ENCODE measurements at regions of chr12 and their contacts with region 1.

Region 1: DNA sequence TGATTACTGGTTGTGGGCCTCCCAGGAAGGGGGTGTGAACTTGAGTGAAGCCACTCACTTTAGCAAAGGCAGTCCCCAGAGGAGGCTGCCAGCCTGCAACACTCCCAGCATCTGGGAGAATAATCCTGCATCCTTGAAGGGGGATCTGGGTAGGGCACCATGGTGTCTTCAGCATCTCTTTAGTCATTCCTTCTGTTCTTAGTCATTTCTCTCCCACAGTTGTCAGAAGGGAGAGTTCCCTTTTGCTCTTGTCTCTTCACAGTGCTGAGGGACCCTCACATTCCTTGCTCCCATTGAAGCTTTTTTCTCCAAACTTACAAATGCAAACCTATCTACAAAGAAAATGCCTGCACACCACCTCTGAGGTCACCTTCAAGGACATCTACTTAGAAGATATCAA is 48.1 kb upstream of the CIT start:
- DNase-seq: no peak
- ATAC-seq: no peak
- H3K4me3 ChIP-seq: no peak overlapping the region
- H3K27ac ChIP-seq: no peak overlapping the region
- H3K4me1 ChIP-seq: no peaks in the 10 kb centered on the region
- H3K27me3 ChIP-seq: no peaks in the 10 kb centered on the region; the same call in 1 of the 2 replicates
- CTCF ChIP-seq: no peak

Region 2: GRCh38 chr12:119704065-119704747 is 221.1 kb before region 1 on chr12:
- CTCF ChIA-PET with region 1: no interaction called
- POLR2A ChIA-PET with region 1: no interaction called
- in situ Hi-C with region 1: no loop called
- intact Hi-C with region 1: no loop called
- DNase-seq: no peak
- ATAC-seq: 0 out of 2 replicates have a peak, but pooled peaks have one; percentile 49
- H3K4me3 ChIP-seq: no peak overlapping the region
- H3K27ac ChIP-seq: no peak overlapping the region
- H3K4me1 ChIP-seq: no peaks in the 10 kb centered on the region
- H3K27me3 ChIP-seq: no peaks in the 10 kb centered on the region
- CTCF ChIP-seq: no peak

Region 3: GRCh38 chr12:119819322-119819721 is 105.9 kb before region 1 on chr12:
- CTCF ChIA-PET with region 1: no interaction called
- POLR2A ChIA-PET with region 1: no interaction called
- in situ Hi-C with region 1: no loop called
- intact Hi-C with region 1: no loop called
- DNase-seq: no peak
- ATAC-seq: no peak
- H3K4me3 ChIP-seq: no peak overlapping the region
- H3K27ac ChIP-seq: no peak overlapping the region
- H3K4me1 ChIP-seq: no peaks in the 10 kb centered on the region
- H3K27me3 ChIP-seq: no peaks in the 10 kb centered on the region
- CTCF ChIP-seq: no peak

Region 4: GRCh38 chr12:120048263-120048662 is 123.0 kb after region 1 on chr12:
- CTCF ChIA-PET with region 1: no interaction called
- POLR2A ChIA-PET with region 1: interaction called, 14 read pairs
- in situ Hi-C with region 1: no loop called
- intact Hi-C with region 1: no loop called
- DNase-seq: no peak
- ATAC-seq: no peak
- H3K4me3 ChIP-seq: no peak overlapping the region
- H3K27ac ChIP-seq: no peak overlapping the region
- H3K4me1 ChIP-seq: no peaks in the 10 kb centered on the region
- H3K27me3 ChIP-seq: no peaks in the 10 kb centered on the region
- CTCF ChIP-seq: no peak